GM12878 (cell line): ENCODE measurements at regions of chr3 and their contacts with region 1.

Region 1: DNA sequence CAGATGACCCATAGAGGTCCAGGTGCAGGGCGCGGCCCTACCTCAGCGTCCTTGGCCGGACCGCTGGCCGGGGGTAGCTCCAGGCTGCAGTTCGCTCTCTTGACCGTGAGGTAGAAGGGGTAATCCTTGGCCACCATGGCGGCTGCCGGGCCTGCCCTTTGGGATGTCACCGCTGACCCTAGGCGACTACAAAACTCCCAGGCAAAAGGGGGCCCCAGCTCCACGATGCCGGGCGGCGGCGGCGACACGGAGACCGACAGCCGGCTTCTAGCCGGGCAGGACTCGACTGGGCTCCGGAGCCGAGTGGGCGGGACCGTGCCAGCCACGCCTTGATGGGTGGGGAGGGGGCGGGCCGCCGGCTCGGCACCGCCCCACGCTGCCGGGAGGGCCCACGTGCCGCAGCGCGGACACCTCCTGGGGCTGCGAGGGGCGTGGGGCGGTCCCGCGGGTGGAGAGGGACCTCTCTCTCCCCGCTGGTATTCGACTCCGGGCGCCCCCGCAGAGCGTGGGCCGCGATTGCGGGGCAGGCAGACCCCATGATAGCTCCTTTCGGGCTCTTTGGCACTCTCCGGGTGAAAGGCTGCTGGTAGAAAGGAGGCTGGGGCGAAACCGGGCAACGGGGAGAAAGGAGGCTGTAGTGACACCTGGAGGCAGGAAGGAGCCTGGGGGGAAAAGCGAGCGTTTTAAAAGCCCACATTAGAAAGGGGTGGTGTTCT is at the start of gene ARHGEF3:
- DNase-seq: no peak
- ATAC-seq: peak; percentile 91
- H3K4me3 ChIP-seq: peak within 1 kb of the TSS; percentile 71
- H3K27ac ChIP-seq: peak within 1 kb of the TSS; percentile 54
- H3K4me1 ChIP-seq: peaks cover 6% of the 10 kb centered on the region
- H3K27me3 ChIP-seq: no peaks in the 10 kb centered on the region
- CTCF ChIP-seq: peak; percentile 70 to 81 (median 75)
- EP300 ChIP-seq: no peak
- POLR2A ChIP-seq: peak; percentile 77
- RAD21 ChIP-seq: peak; percentile 67
- polyA plus RNA-seq, gene ARHGEF3: 21.8 to 31.1 TPM

Region 2: DNA sequence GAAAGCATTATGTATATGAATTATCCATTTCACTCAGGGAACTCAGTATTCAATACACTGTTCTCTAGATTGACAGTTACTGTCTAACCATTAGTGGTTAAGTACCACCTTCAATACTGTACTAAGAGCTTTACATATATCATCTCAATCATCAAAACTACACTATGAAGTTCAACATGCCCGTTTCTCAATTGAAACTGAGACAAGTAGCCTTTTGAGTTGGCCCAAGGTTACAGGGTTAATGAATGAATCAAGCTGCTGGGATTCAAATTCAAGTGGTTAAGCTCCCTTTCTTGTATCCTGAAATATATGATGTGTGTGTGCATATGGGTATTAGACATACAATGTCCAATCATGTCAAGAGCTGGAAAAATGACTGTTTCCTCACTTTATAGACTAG is 124.5 kb before region 1 on chr3:
- CTCF ChIA-PET with region 1: interaction called, 15 read pairs
- POLR2A ChIA-PET with region 1: interaction called, 15 read pairs
- RAD21 ChIA-PET with region 1: interaction called, 21 read pairs
- SMC1A ChIA-PET with region 1: interaction called, 4 read pairs
- in situ Hi-C with region 1: no loop called
- intact Hi-C with region 1: no loop called
- DNase-seq: no peak
- ATAC-seq: peak; percentile 71
- H3K4me3 ChIP-seq: no peak overlapping the region
- H3K27ac ChIP-seq: no peak overlapping the region
- H3K4me1 ChIP-seq: no peaks in the 10 kb centered on the region
- H3K27me3 ChIP-seq: no peaks in the 10 kb centered on the region
- CTCF ChIP-seq: no peak
- EP300 ChIP-seq: no peak
- POLR2A ChIP-seq: no peak
- RAD21 ChIP-seq: no peak

Region 3: DNA sequence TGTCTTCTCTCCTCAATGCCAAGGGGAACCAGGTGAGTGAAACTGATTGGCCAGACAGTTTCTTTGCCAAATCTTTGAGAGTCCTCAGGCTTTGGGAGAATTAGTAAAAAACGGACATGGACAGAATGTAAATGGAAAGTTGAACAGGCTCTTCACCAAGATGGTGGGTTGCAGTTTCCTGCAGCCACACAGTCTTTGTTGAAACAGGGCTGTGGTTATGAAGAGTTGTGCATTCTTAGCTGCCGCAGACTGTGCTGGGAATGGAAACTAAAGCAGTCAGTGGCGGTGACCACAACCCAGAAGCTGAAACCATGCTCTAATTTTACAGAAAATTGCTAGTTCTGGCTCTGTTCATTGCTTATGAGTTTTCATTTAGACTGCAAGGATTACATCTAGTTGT is 76.6 kb before region 1 on chr3:
- CTCF ChIA-PET with region 1: interaction called, 108 read pairs
- POLR2A ChIA-PET with region 1: interaction called, 84 read pairs
- RAD21 ChIA-PET with region 1: interaction called, 199 read pairs
- SMC1A ChIA-PET with region 1: interaction called, 152 read pairs
- in situ Hi-C with region 1: no loop called
- intact Hi-C with region 1: loop called (anchors 1 kb)
- DNase-seq: peak; percentile 87
- ATAC-seq: peak; percentile 95
- H3K4me3 ChIP-seq: peak overlapping the region; percentile 34
- H3K27ac ChIP-seq: peak overlapping the region; percentile 70
- H3K4me1 ChIP-seq: peaks cover 26% of the 10 kb centered on the region
- H3K27me3 ChIP-seq: no peaks in the 10 kb centered on the region
- CTCF ChIP-seq: no peak
- EP300 ChIP-seq: peak in 1 of 2 experiments; percentile 78; a peak in 1 of 4 replicates
- POLR2A ChIP-seq: no peak
- RAD21 ChIP-seq: peak; percentile 15; the same call in 1 of the 2 replicates

Region 4: GRCh38 chr3:56769116-56769707 is 32.6 kb before region 1 on chr3:
- CTCF ChIA-PET with region 1: interaction called, 21 read pairs
- POLR2A ChIA-PET with region 1: interaction called, 9 read pairs
- RAD21 ChIA-PET with region 1: interaction called, 245 read pairs
- SMC1A ChIA-PET with region 1: interaction called, 62 read pairs
- in situ Hi-C with region 1: no loop called
- intact Hi-C with region 1: no loop called
- DNase-seq: no peak
- ATAC-seq: no peak
- H3K4me3 ChIP-seq: no peak overlapping the region
- H3K27ac ChIP-seq: no peak overlapping the region
- H3K4me1 ChIP-seq: peaks cover 7% of the 10 kb centered on the region
- H3K27me3 ChIP-seq: no peaks in the 10 kb centered on the region
- CTCF ChIP-seq: no peak
- EP300 ChIP-seq: no peak
- POLR2A ChIP-seq: no peak
- RAD21 ChIP-seq: no peak

Region 5: DNA sequence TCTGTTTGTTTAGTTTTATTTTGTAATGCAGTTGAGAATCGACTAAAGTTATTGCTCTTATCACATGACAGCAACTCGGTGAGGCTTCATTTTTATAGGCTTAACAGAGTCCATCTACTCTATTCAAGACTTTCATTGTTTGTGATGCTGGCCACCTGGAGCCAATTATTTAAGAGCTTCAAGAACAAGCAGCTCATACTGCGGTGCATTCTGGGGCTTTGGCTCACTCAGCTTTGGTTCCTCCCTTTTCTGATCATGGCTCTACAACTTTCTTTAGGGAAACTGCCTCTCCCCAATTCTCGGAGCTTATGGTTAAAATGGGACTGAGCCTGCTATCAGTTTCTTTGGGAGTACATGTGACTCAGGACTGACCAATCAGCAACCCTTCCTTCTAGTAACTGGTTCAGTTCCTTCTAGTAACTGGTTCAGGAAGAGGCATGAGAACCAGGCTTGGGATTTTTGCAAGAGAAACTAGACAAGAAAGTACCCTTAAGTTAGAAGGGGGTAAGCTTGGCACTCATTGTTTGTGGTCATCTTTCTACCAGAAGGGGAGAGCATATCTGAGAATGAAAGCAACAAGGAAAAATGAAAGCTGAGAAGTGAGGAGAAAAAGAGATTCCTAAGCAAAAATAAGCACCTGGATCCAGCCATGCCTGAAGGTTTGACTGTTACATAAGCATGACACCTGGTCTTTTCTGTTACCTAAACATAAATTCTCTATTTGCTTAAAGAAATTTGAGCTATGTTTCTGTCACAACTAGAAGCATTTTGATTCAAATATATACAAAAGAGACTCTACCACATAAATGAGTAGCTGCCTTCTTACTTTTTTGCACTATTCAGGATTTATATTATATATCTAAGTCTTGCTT is 24.0 kb after region 1 on chr3:
- CTCF ChIA-PET with region 1: interaction called, 10 read pairs
- POLR2A ChIA-PET with region 1: interaction called, 5 read pairs
- RAD21 ChIA-PET with region 1: interaction called, 27 read pairs
- SMC1A ChIA-PET with region 1: interaction called, 40 read pairs
- in situ Hi-C with region 1: no loop called
- intact Hi-C with region 1: no loop called
- DNase-seq: no peak
- ATAC-seq: peak; percentile 46
- H3K4me3 ChIP-seq: no peak overlapping the region
- H3K27ac ChIP-seq: no peak overlapping the region
- H3K4me1 ChIP-seq: peaks cover 6% of the 10 kb centered on the region
- H3K27me3 ChIP-seq: no peaks in the 10 kb centered on the region
- CTCF ChIP-seq: no peak
- EP300 ChIP-seq: no peak
- POLR2A ChIP-seq: no peak
- RAD21 ChIP-seq: no peak

Region 6: GRCh38 chr3:56886314-56886713 is 84.5 kb after region 1 on chr3:
- CTCF ChIA-PET with region 1: no interaction called
- POLR2A ChIA-PET with region 1: no interaction called
- RAD21 ChIA-PET with region 1: no interaction called
- SMC1A ChIA-PET with region 1: no interaction called
- in situ Hi-C with region 1: no loop called
- intact Hi-C with region 1: no loop called
- DNase-seq: no peak
- ATAC-seq: no peak
- H3K4me3 ChIP-seq: no peak overlapping the region
- H3K27ac ChIP-seq: no peak overlapping the region
- H3K4me1 ChIP-seq: peaks cover 8% of the 10 kb centered on the region
- H3K27me3 ChIP-seq: no peaks in the 10 kb centered on the region
- CTCF ChIP-seq: no peak
- EP300 ChIP-seq: no peak
- POLR2A ChIP-seq: no peak
- RAD21 ChIP-seq: no peak

Region 7: DNA sequence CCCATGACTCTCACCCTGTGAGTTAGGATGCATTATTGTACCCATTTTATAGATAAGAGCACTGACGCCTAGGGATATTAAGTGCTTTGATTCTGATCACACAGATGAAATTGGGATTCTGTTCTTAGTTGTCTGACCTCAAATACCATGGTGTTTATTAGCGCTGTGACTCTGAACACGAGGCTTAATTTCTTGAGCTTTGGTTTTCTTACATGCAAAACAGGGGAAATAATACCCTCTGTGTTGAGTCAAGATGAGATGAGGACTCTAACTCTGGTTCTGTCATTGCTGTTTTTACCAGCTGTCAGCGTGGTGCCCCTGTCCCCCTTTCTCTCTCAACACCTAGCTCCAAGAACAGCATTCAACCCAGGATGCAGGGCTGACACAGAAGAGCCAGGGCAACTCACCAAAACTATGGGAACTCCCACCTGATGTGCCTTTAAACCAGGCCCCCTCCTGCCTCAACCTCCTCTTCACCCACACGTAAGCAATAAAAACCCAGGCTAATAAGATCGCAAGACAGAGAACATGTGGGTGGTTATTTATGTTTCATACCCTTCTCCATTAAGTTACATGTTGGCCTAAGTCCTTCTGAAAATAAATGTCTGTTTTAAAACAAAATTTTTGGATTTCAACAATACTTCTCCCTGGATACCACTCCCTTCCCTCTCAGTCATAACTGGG is 158.6 kb after region 1 on chr3:
- CTCF ChIA-PET with region 1: interaction called, 6 read pairs
- POLR2A ChIA-PET with region 1: no interaction called
- RAD21 ChIA-PET with region 1: interaction called, 7 read pairs
- SMC1A ChIA-PET with region 1: interaction called, 11 read pairs
- in situ Hi-C with region 1: no loop called
- intact Hi-C with region 1: loop called (anchors 1 kb)
- DNase-seq: peak; percentile 39
- ATAC-seq: peak; percentile 88
- H3K4me3 ChIP-seq: no peak overlapping the region
- H3K27ac ChIP-seq: no peak overlapping the region
- H3K4me1 ChIP-seq: peaks cover 23% of the 10 kb centered on the region
- H3K27me3 ChIP-seq: no peaks in the 10 kb centered on the region
- CTCF ChIP-seq: no peak
- EP300 ChIP-seq: peak in 1 of 2 experiments; percentile 50; a peak in 1 of 4 replicates
- POLR2A ChIP-seq: no peak
- RAD21 ChIP-seq: no peak